GM23248 (cell line): ENCODE measurements at regions of chr17 and their contacts with region 1.

Region 1: DNA sequence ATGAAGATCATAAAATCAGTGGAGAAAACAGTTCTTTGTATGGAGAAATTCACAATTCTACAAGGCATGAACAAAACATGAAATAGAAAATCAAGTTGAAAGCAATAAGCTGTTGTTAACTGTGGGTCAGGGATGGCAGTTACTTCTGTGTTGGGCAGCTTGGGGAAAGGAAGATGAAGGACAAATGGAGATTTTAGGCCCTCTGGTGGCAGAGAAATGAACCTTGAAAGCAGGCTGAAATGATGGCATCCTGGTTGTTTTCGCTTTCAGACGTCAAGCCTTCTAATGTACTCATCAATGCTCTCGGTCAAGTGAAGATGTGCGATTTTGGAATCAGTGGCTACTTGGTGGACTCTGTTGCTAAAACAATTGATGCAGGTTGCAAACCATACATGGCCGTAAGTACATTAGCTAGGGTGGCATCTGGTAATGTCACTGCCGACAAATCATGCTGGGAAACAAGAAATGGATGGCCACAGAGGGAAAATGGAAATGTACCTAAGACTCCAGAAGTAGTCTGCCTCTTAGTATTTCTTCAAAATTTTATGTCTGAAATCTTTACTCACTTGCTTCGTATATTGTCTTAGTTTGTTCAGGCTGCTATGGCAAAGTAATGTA is 108.9 kb downstream of the MAP2K6 start:
- DNase-seq: peak; percentile 74
- H3K4me3 ChIP-seq: peak overlapping the region; percentile 52
- H3K27ac ChIP-seq: no peak overlapping the region
- H3K4me1 ChIP-seq: no peaks in the 10 kb centered on the region
- H3K27me3 ChIP-seq: no peaks in the 10 kb centered on the region

Region 2: DNA sequence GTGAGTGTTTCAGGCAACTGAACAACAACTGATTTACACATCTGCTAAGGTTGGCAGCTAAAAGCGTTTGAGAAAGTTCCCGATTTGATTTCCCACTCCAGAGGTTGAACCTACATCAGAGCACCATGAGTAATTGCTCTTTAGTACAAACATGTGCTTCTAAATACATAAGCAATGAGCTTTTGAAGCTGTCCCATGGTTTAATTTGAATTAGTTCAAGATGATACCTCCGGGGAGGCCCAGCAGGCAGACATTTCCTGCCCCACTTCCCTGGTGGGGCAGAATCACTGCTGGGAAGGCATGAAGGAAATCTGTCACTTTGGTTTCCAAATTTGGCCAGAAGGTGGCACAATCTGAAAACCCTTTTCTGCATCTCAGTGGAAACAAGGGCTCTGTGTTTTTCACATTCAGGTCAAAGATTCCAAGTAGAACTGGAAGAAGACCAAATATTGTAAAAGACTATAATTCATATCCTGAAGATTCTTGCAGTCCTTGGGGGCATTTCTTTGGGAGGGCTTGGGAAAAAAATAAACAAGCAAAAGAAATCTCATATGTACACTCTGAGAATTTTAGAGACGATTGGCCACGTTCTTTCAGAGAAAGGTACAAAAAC is 746.0 kb before region 1 on chr17:
- in situ Hi-C with region 1: loop called (anchors 25 kb)
- DNase-seq: peak; percentile 77
- H3K4me3 ChIP-seq: no peak overlapping the region
- H3K27ac ChIP-seq: peak overlapping the region; percentile 21; the same call in 1 of the 2 replicates
- H3K4me1 ChIP-seq: peaks cover 31% of the 10 kb centered on the region
- H3K27me3 ChIP-seq: no peaks in the 10 kb centered on the region

Region 3: GRCh38 chr17:69335058-69335457 is 188.3 kb before region 1 on chr17:
- in situ Hi-C with region 1: loop called (anchors 5 kb)
- DNase-seq: peak; percentile 64
- H3K4me3 ChIP-seq: no peak overlapping the region
- H3K27ac ChIP-seq: no peak overlapping the region
- H3K4me1 ChIP-seq: no peaks in the 10 kb centered on the region
- H3K27me3 ChIP-seq: no peaks in the 10 kb centered on the region

Region 4: GRCh38 chr17:69581061-69581961 is 58.0 kb after region 1 on chr17:
- in situ Hi-C with region 1: no loop called
- DNase-seq: no peak
- H3K4me3 ChIP-seq: no peak overlapping the region
- H3K27ac ChIP-seq: no peak overlapping the region
- H3K4me1 ChIP-seq: no peaks in the 10 kb centered on the region
- H3K27me3 ChIP-seq: no peaks in the 10 kb centered on the region; the same call in 1 of the 2 replicates

Region 5: DNA sequence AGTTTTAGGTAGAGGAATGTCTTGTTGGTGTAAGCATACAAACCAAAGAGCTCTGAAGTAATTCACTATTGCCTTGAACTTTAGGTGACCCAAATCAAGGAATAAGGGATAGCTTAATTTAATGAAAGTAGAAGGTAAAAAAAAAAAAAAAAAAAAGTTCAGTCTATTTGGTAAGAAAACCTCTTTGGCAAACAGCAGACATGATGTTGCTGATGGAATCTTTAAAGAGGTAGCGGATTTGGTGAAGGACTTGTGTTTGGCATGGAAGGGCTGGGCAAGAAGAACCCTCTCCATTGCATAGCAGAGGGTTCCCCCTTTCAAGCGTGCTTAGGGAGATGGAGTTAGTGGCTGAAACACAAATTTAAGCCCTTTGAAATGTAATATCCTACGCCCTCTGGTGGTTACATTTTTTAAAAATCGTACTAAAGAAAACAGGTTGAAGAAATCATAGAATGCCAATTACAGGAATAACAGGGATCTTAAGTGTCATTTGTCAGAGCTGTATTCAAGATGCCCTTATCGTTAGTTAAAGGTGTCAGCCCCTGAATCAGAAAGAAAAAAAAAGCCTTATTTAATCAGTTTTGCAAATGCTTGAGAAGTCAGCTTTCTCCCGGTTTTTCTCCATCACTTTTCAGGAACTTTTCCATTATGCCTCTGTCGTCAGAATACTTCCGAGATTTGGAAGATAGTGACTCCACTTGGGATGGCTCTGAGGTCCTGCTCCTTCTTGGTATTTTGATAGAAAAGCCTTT is 1029.1 kb after region 1 on chr17:
- in situ Hi-C with region 1: loop called (anchors 25 kb)
- DNase-seq: peak; percentile 58
- H3K4me3 ChIP-seq: no peak overlapping the region
- H3K27ac ChIP-seq: no peak overlapping the region
- H3K4me1 ChIP-seq: no peaks in the 10 kb centered on the region
- H3K27me3 ChIP-seq: no peaks in the 10 kb centered on the region